ENCODE measurements at regions of chr3 and their contacts with region 1.

Region 1: DNA sequence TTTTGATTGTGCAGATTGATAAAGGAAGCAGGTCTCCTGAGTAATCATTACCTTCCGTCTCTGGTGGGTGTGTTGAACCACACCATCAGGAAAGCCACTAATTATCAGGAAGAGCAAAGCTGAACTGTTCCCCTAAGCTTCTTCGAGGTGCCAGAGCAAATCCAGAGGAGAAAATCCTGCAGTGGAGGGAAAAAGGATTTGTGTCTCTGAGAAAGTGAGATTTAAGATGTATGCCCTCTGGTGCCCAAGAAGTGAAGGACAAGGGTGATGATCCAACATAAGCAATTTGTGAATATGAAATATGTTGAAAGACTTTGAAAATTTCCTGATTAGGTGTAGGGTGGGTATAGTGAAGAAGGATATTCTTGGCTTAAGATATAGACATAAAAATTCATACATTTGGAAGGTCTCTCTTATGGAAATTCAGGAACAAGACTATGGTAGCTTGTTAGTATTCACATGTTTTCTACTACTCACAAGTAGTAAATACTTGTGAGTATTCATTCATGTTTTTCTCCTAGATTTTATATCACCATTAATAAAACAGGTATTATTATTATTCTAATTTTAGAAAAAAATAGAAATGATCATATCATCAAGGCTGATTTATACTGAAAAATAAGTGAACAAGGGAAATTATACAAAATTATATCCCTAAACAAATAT is 34.8 kb downstream of the COMMD2 start:
- DNase-seq: peak; percentile 82
- ATAC-seq: peak; percentile 85
- H3K4me3 ChIP-seq: no peak overlapping the region
- H3K27ac ChIP-seq: no peak overlapping the region
- H3K4me1 ChIP-seq: no peaks in the 10 kb centered on the region
- H3K27me3 ChIP-seq: no peaks in the 10 kb centered on the region
- CTCF ChIP-seq: peak; percentile 78
- POLR2A ChIP-seq: no peak
- RAD21 ChIP-seq: peak; percentile 81

Region 2: GRCh38 chr3:149494022-149494758 is 223.3 kb before region 1 on chr3:
- CTCF ChIA-PET with region 1: interaction called, 3 read pairs
- POLR2A ChIA-PET with region 1: no interaction called
- dilution Hi-C with region 1: no loop called
- in situ Hi-C with region 1: no loop called
- intact Hi-C with region 1: loop called (anchors 1 kb)
- DNase-seq: peak; percentile 76
- ATAC-seq: peak; percentile 88
- H3K4me3 ChIP-seq: no peak overlapping the region
- H3K27ac ChIP-seq: no peak overlapping the region
- H3K4me1 ChIP-seq: peaks cover 9% of the 10 kb centered on the region
- H3K27me3 ChIP-seq: no peaks in the 10 kb centered on the region
- CTCF ChIP-seq: peak; percentile 89
- POLR2A ChIP-seq: no peak
- RAD21 ChIP-seq: peak; percentile 90

Region 3: DNA sequence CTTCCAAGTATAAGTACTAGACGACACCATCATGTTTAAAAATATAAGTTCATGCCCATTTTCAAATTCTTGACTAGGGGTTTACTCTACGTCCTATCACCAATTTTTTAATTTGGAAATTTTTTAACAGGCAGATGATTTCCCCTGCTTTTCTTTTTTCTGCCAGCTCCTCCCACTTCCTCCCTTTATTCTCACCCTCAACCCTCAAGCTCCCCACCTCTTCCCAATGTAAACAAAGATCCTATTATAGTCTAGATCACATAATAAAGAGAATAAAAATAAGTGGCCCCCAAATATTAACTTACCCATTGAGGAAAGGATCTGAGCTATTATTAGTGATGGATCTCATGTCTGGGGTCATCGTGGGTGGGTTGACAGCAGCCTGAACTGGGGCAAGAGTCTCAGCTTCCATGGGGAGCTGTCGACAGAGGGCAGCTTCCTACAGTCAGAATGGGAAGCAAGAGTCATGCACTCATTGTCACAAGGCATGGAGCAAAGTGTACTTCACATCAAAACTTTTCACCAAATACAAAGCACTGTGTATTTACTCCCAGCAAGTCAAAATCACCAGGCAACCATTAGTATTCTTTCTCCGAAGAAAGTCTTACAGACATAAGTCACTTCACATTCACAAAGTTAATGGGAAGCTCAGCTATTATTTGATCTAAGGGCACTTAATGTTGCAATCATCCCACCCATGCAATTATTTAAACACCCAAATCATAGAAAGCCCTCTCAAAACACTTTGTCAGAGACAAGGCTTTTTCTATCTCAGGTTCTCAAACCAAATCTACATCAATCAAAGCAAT is 189.8 kb before region 1 on chr3:
- CTCF ChIA-PET with region 1: interaction called, 17 read pairs
- POLR2A ChIA-PET with region 1: no interaction called
- dilution Hi-C with region 1: no loop called
- in situ Hi-C with region 1: no loop called
- intact Hi-C with region 1: loop called (anchors 1 kb)
- DNase-seq: peak; percentile 39
- ATAC-seq: peak; percentile 40; the same call in 1 of the 2 replicates
- H3K4me3 ChIP-seq: no peak overlapping the region
- H3K27ac ChIP-seq: no peak overlapping the region
- H3K4me1 ChIP-seq: peaks cover 9% of the 10 kb centered on the region
- H3K27me3 ChIP-seq: no peaks in the 10 kb centered on the region
- CTCF ChIP-seq: 0 out of 2 replicates have a peak, but pooled peaks have one; percentile 21
- POLR2A ChIP-seq: no peak
- RAD21 ChIP-seq: peak; percentile 40

Region 4: GRCh38 chr3:149570016-149570415 is 147.5 kb before region 1 on chr3:
- CTCF ChIA-PET with region 1: interaction called, 10 read pairs
- POLR2A ChIA-PET with region 1: no interaction called
- dilution Hi-C with region 1: no loop called
- in situ Hi-C with region 1: no loop called
- intact Hi-C with region 1: loop called (anchors 1 kb)
- DNase-seq: no peak
- ATAC-seq: no peak
- H3K4me3 ChIP-seq: no peak overlapping the region
- H3K27ac ChIP-seq: no peak overlapping the region
- H3K4me1 ChIP-seq: peaks cover 20% of the 10 kb centered on the region
- H3K27me3 ChIP-seq: no peaks in the 10 kb centered on the region
- CTCF ChIP-seq: no peak
- POLR2A ChIP-seq: no peak
- RAD21 ChIP-seq: no peak

Measured in IMR-90 (cell line).